ENCODE measurements at regions of chr14 and their contacts with region 1.

Region 1: DNA sequence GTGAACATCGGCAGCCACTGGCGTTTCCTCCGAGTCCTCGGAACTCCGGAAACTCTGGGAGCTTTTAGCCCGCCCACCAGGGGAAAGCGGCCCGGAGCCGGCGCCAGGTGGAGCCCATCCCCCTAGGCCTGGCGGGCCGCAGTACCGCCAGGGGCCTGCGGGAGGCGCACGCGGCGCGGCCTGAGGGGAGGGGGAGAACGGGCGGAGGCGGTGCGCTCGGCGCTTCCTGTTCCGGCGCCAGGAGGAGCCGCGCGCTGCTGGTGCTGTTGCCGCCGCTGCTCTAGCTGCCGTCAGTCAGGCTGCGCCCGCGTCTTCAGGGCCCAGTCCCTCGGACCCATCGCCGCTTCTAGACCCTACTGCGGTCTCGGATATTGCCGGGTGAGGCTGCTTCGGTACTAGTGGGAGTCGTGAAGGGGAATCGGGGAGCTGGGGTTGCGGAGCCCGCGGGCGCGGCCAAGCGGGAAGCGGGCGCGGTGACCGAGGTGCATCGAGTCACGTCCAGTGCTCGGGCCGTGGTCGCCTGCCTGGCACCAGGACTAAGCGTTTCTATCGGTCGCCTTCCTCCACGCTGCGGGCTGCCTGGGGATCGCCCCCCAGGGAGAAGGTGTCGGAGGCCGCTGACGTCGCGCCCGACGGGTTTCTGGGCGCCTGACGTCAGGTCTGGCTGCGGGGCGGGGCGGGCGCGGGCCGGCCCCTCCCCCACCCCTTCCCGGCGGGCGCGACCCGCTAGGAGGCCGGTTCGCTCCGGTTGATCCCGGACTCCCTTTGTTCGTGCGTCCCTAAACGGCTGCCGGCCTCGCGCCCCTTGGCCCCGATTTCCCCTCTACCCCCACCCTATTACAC is at the start of gene MAPK1IP1L:
- DNase-seq: peak; percentile 91 to 94
- ATAC-seq: peak; percentile 91 to 99 (median 91)
- H3K4me3 ChIP-seq: peak within 1 kb of the TSS; percentile 96
- H3K4me3 Mint-ChIP-seq: peak within 1 kb of the TSS; percentile 92
- H3K27ac ChIP-seq: peak within 1 kb of the TSS; percentile 99
- H3K27ac Mint-ChIP-seq: peak within 1 kb of the TSS; percentile 86 to 93
- H3K4me1 ChIP-seq: peaks cover 15% of the 10 kb centered on the region
- H3K4me1 Mint-ChIP-seq: peaks cover 38% of the 10 kb centered on the region in 2 donors
- H3K27me3 ChIP-seq: no peaks in the 10 kb centered on the region
- H3K27me3 Mint-ChIP-seq: no peaks in the 10 kb centered on the region
- CTCF ChIP-seq: peak; percentile 100
- total RNA-seq, gene MAPK1IP1L: 119 to 140 (median 127) TPM

Region 2: GRCh38 chr14:55026793-55027561 is 24.7 kb before region 1 on chr14 and contains the starts of genes SOCS4 and WDHD1:
- intact Hi-C with region 1: loop called (anchors 1 kb)
- DNase-seq: peak; percentile 96 to 98
- ATAC-seq: peak; percentile 92 to 97 (median 94)
- H3K4me3 ChIP-seq: peak within 1 kb of the TSS; percentile 83
- H3K4me3 Mint-ChIP-seq: peak within 1 kb of the TSS; percentile 94
- H3K27ac ChIP-seq: peak within 1 kb of the TSS; percentile 85
- H3K27ac Mint-ChIP-seq: peak within 1 kb of the TSS; percentile 92 to 93
- H3K4me1 ChIP-seq: no peaks in the 10 kb centered on the region
- H3K4me1 Mint-ChIP-seq: peaks cover 32 to 36% of the 10 kb centered on the region in 2 donors
- H3K27me3 ChIP-seq: no peaks in the 10 kb centered on the region
- H3K27me3 Mint-ChIP-seq: no peaks in the 10 kb centered on the region
- CTCF ChIP-seq: no peak
- total RNA-seq, gene SOCS4: 17.6 to 21.9 (median 21.9) TPM
- total RNA-seq, gene WDHD1: 4.5 to 5.4 (median 5.3) TPM

Region 3: DNA sequence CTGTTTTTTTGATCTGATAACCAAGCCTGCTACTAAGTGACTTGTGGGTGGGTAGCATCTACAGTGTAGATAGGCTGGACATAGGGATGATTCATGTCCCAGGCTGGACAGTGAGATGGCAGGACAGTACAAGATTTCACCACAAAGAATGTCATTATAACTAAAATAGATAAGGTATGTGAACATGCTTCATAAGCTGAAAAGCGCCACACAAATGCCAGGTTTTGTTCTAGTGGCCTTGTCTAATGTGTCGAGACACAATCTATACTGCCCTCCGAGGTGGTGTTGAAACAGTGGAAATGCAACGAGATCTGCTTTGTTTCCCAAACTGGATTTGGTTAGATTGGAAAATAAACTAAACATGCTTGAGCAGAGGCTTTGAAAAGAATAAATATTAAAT is 81.8 kb after region 1 on chr14:
- intact Hi-C with region 1: no loop called
- DNase-seq: no peak
- ATAC-seq: no peak
- H3K4me3 ChIP-seq: no peak overlapping the region
- H3K4me3 Mint-ChIP-seq: no peak overlapping the region
- H3K27ac ChIP-seq: no peak overlapping the region
- H3K27ac Mint-ChIP-seq: no peak overlapping the region
- H3K4me1 ChIP-seq: peaks cover 16% of the 10 kb centered on the region
- H3K4me1 Mint-ChIP-seq: peaks cover 10 to 22% of the 10 kb centered on the region in 2 donors
- H3K27me3 ChIP-seq: no peaks in the 10 kb centered on the region
- H3K27me3 Mint-ChIP-seq: no peaks in the 10 kb centered on the region
- CTCF ChIP-seq: no peak

Region 4: DNA sequence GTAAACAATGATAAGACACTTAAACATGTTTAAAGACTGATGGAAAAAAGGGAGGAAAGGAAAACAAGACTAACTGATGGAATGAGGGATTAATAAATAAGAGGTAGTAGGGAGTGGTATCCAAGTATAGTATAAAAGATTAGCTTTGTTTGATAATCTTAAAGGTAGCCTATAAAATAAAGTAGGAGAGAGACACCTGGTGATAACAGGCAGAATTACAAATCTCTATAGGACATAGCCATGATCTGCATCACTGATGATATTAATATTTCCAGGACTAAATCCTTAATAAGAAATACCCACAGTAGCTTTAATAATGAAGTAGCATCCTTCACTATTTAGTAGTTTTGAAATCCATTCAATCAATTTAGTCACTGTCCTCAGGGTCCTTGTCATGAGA is 109.3 kb after region 1 on chr14:
- intact Hi-C with region 1: loop called (anchors 1 kb)
- DNase-seq: peak in 1 of 2 donors; percentile 65
- ATAC-seq: peak; percentile 57 to 87 (median 76)
- H3K4me3 ChIP-seq: no peak overlapping the region
- H3K4me3 Mint-ChIP-seq: no peak overlapping the region
- H3K27ac ChIP-seq: no peak overlapping the region
- H3K27ac Mint-ChIP-seq: no peak overlapping the region
- H3K4me1 ChIP-seq: no peaks in the 10 kb centered on the region
- H3K4me1 Mint-ChIP-seq: peaks cover 0 to 5% of the 10 kb centered on the region in 2 donors
- H3K27me3 ChIP-seq: no peaks in the 10 kb centered on the region
- H3K27me3 Mint-ChIP-seq: no peaks in the 10 kb centered on the region
- CTCF ChIP-seq: peak; percentile 67

Region 5: DNA sequence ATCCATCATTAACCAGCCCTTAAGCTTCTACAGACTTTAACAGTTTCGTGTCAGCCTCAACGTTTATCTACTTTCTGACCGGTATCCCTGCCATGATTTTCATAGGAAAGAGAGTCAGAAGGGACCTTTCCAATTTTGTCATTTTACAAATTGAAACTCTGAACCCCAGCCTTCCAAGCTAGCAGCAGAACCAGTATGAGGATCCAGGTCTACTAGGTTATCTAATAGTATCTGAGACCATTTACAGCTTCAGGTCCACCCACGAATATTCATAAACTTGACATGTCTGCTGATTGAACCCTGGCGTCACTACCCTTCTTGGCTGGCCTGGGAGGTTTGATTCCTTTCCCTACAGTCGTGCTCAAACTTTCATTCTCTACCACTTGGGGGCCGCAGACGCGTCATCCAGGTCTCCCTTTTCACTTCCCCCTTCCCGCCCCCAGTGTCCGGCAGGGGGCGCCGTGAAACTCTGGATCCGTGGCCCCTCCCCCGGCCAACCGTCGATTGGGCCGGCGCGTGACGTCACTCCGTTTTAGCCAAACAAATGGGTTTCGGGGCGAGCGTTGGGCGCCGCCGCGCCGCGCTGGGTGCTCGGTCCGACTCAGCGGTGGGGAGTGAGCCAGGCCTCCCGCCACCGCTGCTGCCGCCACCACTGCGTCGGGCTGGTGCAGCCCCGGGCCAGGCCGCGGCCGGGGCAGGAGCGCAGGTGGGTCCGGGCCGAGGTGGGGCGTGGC is 219.4 kb after region 1 on chr14 and contains the start of gene FBXO34:
- intact Hi-C with region 1: loop called (anchors 10 kb)
- DNase-seq: peak; percentile 99 to 100
- ATAC-seq: peak; percentile 89 to 98 (median 90)
- H3K4me3 ChIP-seq: peak within 1 kb of the TSS; percentile 99
- H3K4me3 Mint-ChIP-seq: peak within 1 kb of the TSS; percentile 92
- H3K27ac ChIP-seq: peak within 1 kb of the TSS; percentile 98
- H3K27ac Mint-ChIP-seq: peak within 1 kb of the TSS; percentile 90 to 94
- H3K4me1 ChIP-seq: peaks cover 9% of the 10 kb centered on the region
- H3K4me1 Mint-ChIP-seq: peaks cover 33 to 38% of the 10 kb centered on the region in 2 donors
- H3K27me3 ChIP-seq: no peaks in the 10 kb centered on the region
- H3K27me3 Mint-ChIP-seq: no peaks in the 10 kb centered on the region
- CTCF ChIP-seq: peak; percentile 97
- total RNA-seq, gene FBXO34: 34.7 to 39.3 (median 36.6) TPM

Region 6: GRCh38 chr14:55579724-55580469 is 528.2 kb after region 1 on chr14 and contains the start of gene KTN1:
- intact Hi-C with region 1: loop called (anchors 5 kb)
- DNase-seq: peak; percentile 83 to 89
- ATAC-seq: peak; percentile 88 to 95 (median 90)
- H3K4me3 ChIP-seq: peak within 1 kb of the TSS; percentile 83
- H3K4me3 Mint-ChIP-seq: peak within 1 kb of the TSS; percentile 97
- H3K27ac ChIP-seq: peak within 1 kb of the TSS; percentile 83
- H3K27ac Mint-ChIP-seq: peak within 1 kb of the TSS; percentile 90 to 91
- H3K4me1 ChIP-seq: peaks cover 18% of the 10 kb centered on the region
- H3K4me1 Mint-ChIP-seq: peaks cover 24 to 27% of the 10 kb centered on the region in 2 donors
- H3K27me3 ChIP-seq: no peaks in the 10 kb centered on the region
- H3K27me3 Mint-ChIP-seq: no peaks in the 10 kb centered on the region
- CTCF ChIP-seq: no peak
- total RNA-seq, gene KTN1: 63.1 to 96.7 (median 72.8) TPM